ENCODE measurements at regions of chr18 and their contacts with region 1.

Region 1: DNA sequence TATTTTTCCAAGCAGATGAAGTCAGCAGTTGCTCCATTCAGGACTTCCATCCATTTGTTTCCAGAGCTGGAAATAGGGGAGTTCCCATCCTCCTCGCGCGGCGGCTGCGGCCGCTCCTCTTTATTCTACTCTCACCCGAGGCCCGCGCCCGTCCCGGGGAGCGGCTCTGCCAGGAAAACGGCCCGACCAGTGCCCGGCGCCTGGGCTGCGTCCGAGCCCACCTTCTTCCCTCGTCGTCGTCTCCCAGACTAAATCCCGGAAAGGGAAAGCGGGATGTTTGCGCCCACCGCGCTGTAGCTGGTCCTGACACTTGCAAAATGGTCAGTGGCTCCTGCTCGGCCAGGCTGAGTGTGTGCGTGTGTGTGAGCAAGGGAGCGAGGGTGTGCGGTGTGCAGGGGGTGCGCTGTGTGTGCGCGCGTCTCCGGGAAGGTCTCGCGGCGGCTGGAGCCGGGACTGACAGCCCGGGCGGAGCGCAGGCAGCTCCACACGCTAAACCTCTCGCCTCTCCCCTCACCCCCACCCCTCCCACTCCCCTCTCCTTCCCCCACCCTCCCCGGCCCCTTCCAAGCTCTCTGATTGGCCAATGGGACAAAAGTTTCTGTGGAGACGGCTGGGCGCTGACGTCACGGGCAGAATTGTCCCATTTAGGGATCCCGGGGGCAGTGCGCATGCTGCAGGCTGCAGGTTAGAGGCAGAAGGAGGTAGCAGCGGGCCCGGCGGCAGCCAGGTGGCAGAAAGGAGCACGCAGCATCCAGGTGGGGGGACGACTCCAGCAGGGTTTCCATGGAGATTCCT is at the start of gene NOL4:
- DNase-seq: peak; percentile 38 to 85 (median 62)
- ATAC-seq: peak; percentile 76
- H3K4me3 ChIP-seq: peak within 1 kb of the TSS; percentile 16 to 20
- H3K27ac ChIP-seq: no peak within 1 kb of the TSS
- H3K4me1 ChIP-seq: peaks cover 5 to 17% of the 10 kb centered on the region in 2 donors
- H3K27me3 ChIP-seq: peaks cover 55 to 75% of the 10 kb centered on the region in 2 donors
- CTCF ChIP-seq: no peak
- polyA plus RNA-seq, gene NOL4: 1.1 to 3.2 (median 1.8) TPM

Region 2: DNA sequence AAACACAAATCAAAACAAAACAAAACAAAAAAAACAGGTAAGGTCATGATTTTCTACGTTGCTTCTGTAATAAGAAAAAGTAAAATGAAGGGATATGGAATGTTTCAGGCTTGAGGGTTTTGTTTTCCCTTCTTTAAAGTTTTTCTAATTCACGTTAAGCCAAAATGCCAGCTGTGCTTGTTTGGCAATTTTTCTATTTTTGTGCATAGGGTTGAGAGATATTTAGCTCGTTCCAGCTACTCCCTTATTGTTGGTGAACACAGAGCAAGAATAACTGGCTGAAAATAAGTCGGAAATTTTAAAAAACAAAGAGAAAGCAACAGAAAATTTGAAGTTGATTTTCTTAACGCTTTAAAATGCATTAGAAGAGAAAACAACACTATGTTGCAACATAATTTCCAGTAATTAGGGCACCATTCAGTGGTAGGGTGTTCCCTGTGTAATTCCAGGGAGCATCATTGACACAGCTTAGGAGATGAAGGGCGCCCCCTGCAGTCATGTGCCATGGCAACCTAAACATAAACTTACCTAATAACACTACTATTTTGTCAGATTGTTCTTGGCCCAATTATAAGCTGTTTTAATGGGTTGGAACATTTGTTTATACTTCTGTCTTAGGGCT is 584.9 kb after region 1 on chr18:
- intact Hi-C with region 1: loop called in 1 of 2 experiments (anchors 10 kb)
- DNase-seq: peak in 3 of 4 donors; percentile 46 to 66 (median 51)
- ATAC-seq: peak; percentile 71
- H3K4me3 ChIP-seq: no peak overlapping the region
- H3K27ac ChIP-seq: peak overlapping the region; percentile 34 to 42
- H3K4me1 ChIP-seq: no peaks in the 10 kb centered on the region
- H3K27me3 ChIP-seq: no peaks in the 10 kb centered on the region
- CTCF ChIP-seq: peak in 1 of 2 donors; percentile 33